Activated CD8-positive, alpha-beta T cell treated with anti-CD3 and anti-CD28 coated beads, Interleukin-2, amount 10 ng/mL, durations not matched to agents 7 days and 5 days (primary cell): ENCODE measurements at regions of chr21 and their contacts with region 1.

Region 1: DNA sequence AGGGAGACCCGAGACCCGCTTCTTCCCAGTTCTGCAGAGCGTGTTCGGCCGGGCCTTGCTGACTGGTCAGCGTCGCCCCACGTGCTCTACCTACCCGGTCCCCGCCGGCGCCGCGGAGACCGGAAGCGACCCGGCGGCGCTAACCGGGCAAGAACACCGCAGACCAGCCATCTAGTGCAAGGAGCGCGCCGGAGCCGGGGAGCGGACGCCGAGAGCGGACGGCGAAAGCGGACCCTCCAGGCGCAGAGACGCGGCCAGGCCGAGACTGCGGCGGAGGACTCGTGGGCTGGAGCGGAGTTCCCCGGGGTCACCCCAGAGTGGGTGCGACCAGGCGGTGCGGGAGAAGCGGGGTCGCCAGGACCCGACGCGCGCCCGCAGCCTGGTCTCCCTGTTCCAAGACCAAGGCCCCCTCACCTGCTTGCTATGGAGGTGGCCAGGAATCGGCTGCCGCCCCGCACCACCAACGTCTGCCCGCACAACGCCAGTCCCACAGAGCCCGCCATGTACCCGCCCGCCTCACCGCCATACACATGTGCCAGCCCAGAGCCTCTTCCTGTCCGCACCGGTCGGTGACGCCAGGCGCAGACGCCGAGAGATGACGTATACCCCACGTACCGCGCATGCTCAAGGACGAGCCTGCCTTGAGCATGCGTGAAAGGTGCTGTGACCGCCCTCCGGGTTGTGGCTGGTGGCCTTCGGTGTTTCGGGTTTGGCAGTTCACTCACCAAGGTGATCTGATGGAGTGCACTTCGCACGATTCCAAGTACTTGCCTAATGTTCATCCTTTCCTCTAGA is at the start of gene WDR4:
- DNase-seq: peak; percentile 99
- ATAC-seq: peak; percentile 93
- H3K4me3 Mint-ChIP-seq: peak within 1 kb of the TSS; percentile 93
- H3K27ac Mint-ChIP-seq: peak within 1 kb of the TSS; percentile 97
- H3K4me1 Mint-ChIP-seq: peaks cover 24% of the 10 kb centered on the region
- H3K27me3 Mint-ChIP-seq: no peaks in the 10 kb centered on the region
- total RNA-seq, gene WDR4: 35.6 to 40.9 TPM

Region 2: DNA sequence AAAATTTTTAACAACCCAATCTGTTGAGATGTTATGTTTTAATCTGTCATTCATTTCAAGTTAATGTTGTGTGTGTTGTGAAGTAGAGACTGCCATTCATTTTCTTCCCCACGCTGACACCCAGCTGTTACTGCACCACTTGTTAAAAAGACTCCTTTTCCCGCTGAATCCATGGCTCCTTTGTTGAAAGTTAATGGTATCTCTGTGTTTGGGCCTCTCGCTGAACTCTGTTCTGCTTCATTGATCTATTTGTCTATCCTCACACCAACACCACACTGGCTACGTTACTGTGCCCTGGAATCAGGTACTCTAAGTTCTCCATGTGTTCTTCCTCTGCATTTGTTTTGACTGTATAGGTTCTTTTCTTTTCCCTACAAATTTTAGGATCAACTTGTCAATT is 167.5 kb before region 1 on chr21:
- CTCF ChIA-PET with region 1: no interaction called
- POLR2A ChIA-PET with region 1: no interaction called
- DNase-seq: no peak
- ATAC-seq: no peak
- H3K4me3 Mint-ChIP-seq: no peak overlapping the region
- H3K27ac Mint-ChIP-seq: no peak overlapping the region
- H3K4me1 Mint-ChIP-seq: no peaks in the 10 kb centered on the region
- H3K27me3 Mint-ChIP-seq: peaks cover 2% of the 10 kb centered on the region

Region 3: DNA sequence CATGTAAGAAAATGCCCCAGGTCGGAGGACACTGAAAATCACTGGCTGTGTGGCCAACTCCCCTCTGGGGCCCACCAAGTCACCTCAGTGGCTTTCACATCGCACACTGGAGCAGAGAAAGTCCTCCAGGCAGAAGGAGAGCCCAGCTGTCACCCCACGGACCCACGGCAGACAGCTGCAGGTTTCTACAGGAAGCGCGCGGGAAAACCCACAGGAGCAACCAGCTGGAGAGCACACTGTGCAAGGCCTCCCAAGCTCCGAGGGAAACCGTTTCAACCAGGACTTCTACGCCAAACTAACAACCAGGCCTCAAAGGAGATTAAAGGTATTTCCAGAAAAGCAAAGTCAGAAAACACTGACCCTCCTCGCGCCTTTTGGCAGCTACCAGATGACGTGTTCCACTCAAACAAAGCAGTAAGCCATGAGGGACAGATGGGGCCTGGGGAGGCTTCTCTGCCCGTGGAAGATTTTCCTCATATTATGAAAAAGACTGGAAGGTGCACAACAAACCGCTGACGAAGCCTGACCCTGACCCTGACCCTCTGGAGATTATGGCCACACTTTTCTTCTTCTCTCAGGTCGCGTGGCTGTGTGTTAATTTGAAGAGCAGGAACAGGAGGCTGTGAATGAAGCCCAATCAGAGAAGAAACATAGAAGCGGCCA is 20.9 kb before region 1 on chr21:
- CTCF ChIA-PET with region 1: no interaction called
- POLR2A ChIA-PET with region 1: no interaction called
- DNase-seq: no peak
- ATAC-seq: no peak
- H3K4me3 Mint-ChIP-seq: no peak overlapping the region
- H3K27ac Mint-ChIP-seq: peak overlapping the region; percentile 62
- H3K4me1 Mint-ChIP-seq: peaks cover 2% of the 10 kb centered on the region
- H3K27me3 Mint-ChIP-seq: no peaks in the 10 kb centered on the region

Region 4: GRCh38 chr21:42892931-42893755 is 14.0 kb after region 1 on chr21 and contains the start of gene NDUFV3:
- CTCF ChIA-PET with region 1: interaction called, 8 read pairs
- POLR2A ChIA-PET with region 1: interaction called, 35 read pairs
- DNase-seq: peak; percentile 100
- ATAC-seq: peak; percentile 95
- H3K4me3 Mint-ChIP-seq: peak within 1 kb of the TSS; percentile 83
- H3K27ac Mint-ChIP-seq: peak within 1 kb of the TSS; percentile 94
- H3K4me1 Mint-ChIP-seq: peaks cover 11% of the 10 kb centered on the region
- H3K27me3 Mint-ChIP-seq: no peaks in the 10 kb centered on the region
- total RNA-seq, gene NDUFV3: 27.7 to 28.1 TPM